ENCODE measurements at regions of chr11 and their contacts with region 1.

Region 1: DNA sequence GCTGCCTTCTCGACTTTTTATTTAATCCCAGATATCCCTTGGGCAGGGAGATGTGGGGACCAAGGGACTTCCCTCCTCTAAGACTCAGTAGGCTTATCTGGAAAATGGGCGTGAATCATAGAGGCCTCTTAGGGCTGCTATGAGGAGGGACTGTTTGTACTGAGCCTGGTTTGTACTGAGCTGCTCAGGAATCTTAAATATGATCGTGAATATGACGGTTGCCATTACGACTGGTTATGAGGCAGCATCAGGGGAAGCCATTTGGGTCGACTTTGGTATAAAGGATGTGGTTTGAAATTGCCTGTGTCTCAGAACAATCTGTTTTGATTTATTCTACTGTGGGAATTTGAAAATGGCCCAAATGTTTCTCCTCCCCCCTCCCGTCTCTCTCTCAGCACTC is 20.6 kb downstream of the TSPAN18 start:
- DNase-seq: no peak

Region 2: GRCh38 chr11:44519989-44520737 is 227.2 kb before region 1 on chr11:
- CTCF ChIA-PET with region 1: interaction called, 10 read pairs
- POLR2A ChIA-PET with region 1: no interaction called
- DNase-seq: no peak

Measured in HEK293T (cell line).